Mammary epithelial cell (primary cell): ENCODE measurements at regions of chr10 and their contacts with region 1.

Region 1: GRCh38 chr10:104406715-104407650 is 53.4 kb downstream of the CFAP58 start:
- DNase-seq: peak; percentile 27
- H3K4me3 ChIP-seq: no peak overlapping the region
- H3K27ac ChIP-seq: no peak overlapping the region
- H3K4me1 ChIP-seq: no peaks in the 10 kb centered on the region
- H3K27me3 ChIP-seq: no peaks in the 10 kb centered on the region
- CTCF ChIP-seq: peak; percentile 77 to 86

Region 2: DNA sequence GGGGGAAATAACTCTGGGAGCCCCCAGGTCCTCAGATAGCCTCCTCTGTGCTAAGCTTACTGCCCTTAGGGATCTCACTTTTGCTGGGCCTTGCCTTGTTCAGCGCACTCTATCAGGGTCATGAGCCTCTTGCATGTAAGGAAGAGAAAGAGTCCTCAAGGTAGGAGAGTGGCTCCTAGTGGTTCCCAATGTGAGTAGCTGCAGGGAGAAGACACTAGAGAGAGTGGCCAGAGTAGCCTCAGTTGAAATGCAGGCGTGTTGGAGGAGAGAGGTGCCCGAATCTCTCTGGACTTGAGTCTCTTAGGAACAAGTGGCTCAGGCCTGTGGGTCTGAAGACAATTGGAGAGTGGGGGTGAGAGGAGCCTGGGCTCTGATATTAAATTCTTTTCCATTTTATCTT is 139.8 kb after region 1 on chr10:
- CTCF ChIA-PET with region 1: no interaction called
- dilution Hi-C with region 1: no loop called
- in situ Hi-C with region 1: no loop called
- intact Hi-C with region 1: loop called (anchors 1 kb)
- DNase-seq: no peak
- H3K4me3 ChIP-seq: no peak overlapping the region
- H3K27ac ChIP-seq: no peak overlapping the region
- H3K4me1 ChIP-seq: no peaks in the 10 kb centered on the region
- H3K27me3 ChIP-seq: no peaks in the 10 kb centered on the region
- CTCF ChIP-seq: peak; percentile 1 to 30

Region 3: GRCh38 chr10:104580774-104581675 is 174.0 kb after region 1 on chr10:
- CTCF ChIA-PET with region 1: no interaction called
- dilution Hi-C with region 1: loop called (anchors 25 kb)
- in situ Hi-C with region 1: no loop called
- intact Hi-C with region 1: loop called (anchors 1 kb)
- DNase-seq: peak; percentile 57
- H3K4me3 ChIP-seq: no peak overlapping the region
- H3K27ac ChIP-seq: no peak overlapping the region
- H3K4me1 ChIP-seq: peaks cover 20% of the 10 kb centered on the region
- H3K27me3 ChIP-seq: no peaks in the 10 kb centered on the region
- CTCF ChIP-seq: peak; percentile 85 to 89

Region 4: GRCh38 chr10:104608091-104608828 is 201.3 kb after region 1 on chr10:
- CTCF ChIA-PET with region 1: no interaction called
- dilution Hi-C with region 1: no loop called
- in situ Hi-C with region 1: loop called (anchors 5 to 10 kb)
- intact Hi-C with region 1: no loop called
- DNase-seq: no peak
- H3K4me3 ChIP-seq: no peak overlapping the region
- H3K27ac ChIP-seq: no peak overlapping the region
- H3K4me1 ChIP-seq: no peaks in the 10 kb centered on the region
- H3K27me3 ChIP-seq: peaks cover under 1% of the 10 kb centered on the region
- CTCF ChIP-seq: no peak

Region 5: GRCh38 chr10:104614245-104614831 is 207.4 kb after region 1 on chr10:
- CTCF ChIA-PET with region 1: no interaction called
- dilution Hi-C with region 1: no loop called
- in situ Hi-C with region 1: loop called (anchors 5 to 10 kb)
- intact Hi-C with region 1: loop called (anchors 1 kb)
- DNase-seq: peak; percentile 23
- H3K4me3 ChIP-seq: no peak overlapping the region
- H3K27ac ChIP-seq: no peak overlapping the region
- H3K4me1 ChIP-seq: no peaks in the 10 kb centered on the region
- H3K27me3 ChIP-seq: no peaks in the 10 kb centered on the region
- CTCF ChIP-seq: peak; percentile 70

Region 6: GRCh38 chr10:104622598-104623209 is 215.7 kb after region 1 on chr10:
- CTCF ChIA-PET with region 1: interaction called, 6 read pairs
- dilution Hi-C with region 1: no loop called
- in situ Hi-C with region 1: loop called in 1 of 2 experiments (anchors 10 kb)
- intact Hi-C with region 1: loop called (anchors 1 kb)
- DNase-seq: peak; percentile 42
- H3K4me3 ChIP-seq: no peak overlapping the region
- H3K27ac ChIP-seq: no peak overlapping the region
- H3K4me1 ChIP-seq: no peaks in the 10 kb centered on the region
- H3K27me3 ChIP-seq: peaks cover 4% of the 10 kb centered on the region
- CTCF ChIP-seq: peak; percentile 86 to 94

Region 7: GRCh38 chr10:104925232-104925851 is 518.4 kb after region 1 on chr10:
- CTCF ChIA-PET with region 1: no interaction called
- dilution Hi-C with region 1: no loop called
- in situ Hi-C with region 1: no loop called
- intact Hi-C with region 1: loop called (anchors 5 kb)
- DNase-seq: peak; percentile 16
- H3K4me3 ChIP-seq: no peak overlapping the region
- H3K27ac ChIP-seq: no peak overlapping the region
- H3K4me1 ChIP-seq: no peaks in the 10 kb centered on the region
- H3K27me3 ChIP-seq: peaks cover 2% of the 10 kb centered on the region
- CTCF ChIP-seq: peak; percentile 80 to 81